AG04449 (cell line): ENCODE measurements at regions of chr1 and their contacts with region 1.

Region 1: DNA sequence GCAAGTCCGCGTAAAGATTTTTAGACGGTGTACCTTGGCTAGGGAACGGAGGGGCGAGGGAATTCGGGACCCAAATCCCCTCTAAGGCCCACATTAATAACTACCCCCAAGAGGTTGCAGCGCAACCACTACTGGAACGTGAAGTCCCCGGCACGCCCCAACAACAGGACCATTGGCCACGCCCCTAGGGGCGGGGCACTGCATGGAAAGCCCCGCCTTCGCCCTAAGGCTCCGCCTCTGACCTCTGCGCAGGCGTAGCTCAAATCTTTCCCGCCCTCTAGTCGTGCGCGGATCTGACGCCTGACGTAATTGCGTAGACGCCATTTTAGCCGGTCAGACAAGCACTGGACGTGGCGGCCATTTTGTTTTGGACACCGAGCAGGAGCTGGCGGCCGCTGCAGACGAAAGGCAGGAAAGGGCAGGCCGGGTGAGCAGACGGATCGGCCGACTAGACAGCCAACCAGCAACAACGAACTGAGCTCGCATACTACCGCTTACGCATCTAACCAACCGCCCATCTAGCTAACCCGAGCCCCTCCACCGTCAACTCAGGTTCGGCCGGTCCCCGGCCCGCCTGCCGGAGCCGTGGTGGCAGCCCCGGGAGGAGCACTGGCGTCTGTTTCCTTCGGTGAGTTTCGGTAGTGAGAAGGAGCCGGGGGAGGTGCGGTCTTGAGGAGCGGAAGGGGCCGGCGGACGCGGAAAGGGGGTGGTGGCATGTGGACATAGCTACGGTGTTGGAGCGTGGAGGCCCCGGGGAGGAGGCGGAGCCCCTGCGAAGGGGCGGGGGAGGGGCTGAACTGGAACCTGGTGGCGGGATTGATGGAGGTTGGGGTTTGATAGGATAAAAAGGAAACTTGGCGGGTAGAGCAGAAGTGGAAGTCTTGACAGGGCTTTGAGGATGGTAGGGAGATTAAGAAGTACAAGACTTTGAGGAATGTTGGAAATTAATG is at the start of gene CHTOP:
- DNase-seq: peak; percentile 90
- H3K4me3 ChIP-seq: peak within 1 kb of the TSS; percentile 97
- CTCF ChIP-seq: no peak

Region 2: GRCh38 chr1:153277817-153278216 is 356.2 kb before region 1 on chr1:
- CTCF ChIA-PET with region 1: no interaction called
- POLR2A ChIA-PET with region 1: no interaction called
- DNase-seq: no peak
- H3K4me3 ChIP-seq: no peak overlapping the region
- CTCF ChIP-seq: peak; percentile 24

Region 3: GRCh38 chr1:153608742-153609584 is 25.0 kb before region 1 on chr1:
- CTCF ChIA-PET with region 1: interaction called, 178 read pairs
- POLR2A ChIA-PET with region 1: interaction called, 21 read pairs
- DNase-seq: no peak
- H3K4me3 ChIP-seq: peak overlapping the region; percentile 58
- CTCF ChIP-seq: no peak

Region 4: GRCh38 chr1:153617675-153618074 is 16.3 kb before region 1 on chr1:
- CTCF ChIA-PET with region 1: interaction called, 178 read pairs
- POLR2A ChIA-PET with region 1: interaction called, 21 read pairs
- DNase-seq: no peak
- H3K4me3 ChIP-seq: no peak overlapping the region
- CTCF ChIP-seq: peak; percentile 81

Region 5: GRCh38 chr1:153683854-153684253 is 49.9 kb after region 1 on chr1:
- CTCF ChIA-PET with region 1: no interaction called
- POLR2A ChIA-PET with region 1: no interaction called
- DNase-seq: no peak
- H3K4me3 ChIP-seq: no peak overlapping the region
- CTCF ChIP-seq: no peak